Heart left ventricle (tissue), 16 donors: ENCODE measurements at regions of chr7 and their contacts with region 1.

Region 1: DNA sequence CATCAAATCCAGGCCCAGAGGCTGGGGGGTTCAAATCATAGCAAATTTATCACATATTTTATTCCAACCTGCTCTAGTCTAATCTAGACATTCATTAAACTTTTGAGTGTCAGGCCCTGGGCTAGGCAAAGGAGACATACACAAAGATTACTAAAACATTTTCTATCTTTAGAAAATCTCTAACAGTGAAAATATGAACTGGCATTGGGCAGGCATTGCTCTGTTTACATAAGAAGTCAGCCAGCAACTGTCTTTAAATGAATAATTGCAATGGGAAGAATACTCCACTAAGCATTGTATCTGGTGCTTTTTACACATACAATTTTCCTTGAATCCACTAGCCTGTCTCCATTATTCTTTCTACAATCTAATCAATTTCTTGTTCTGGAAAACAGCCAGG is 222.5 kb upstream of the LRRN3 start:
- DNase-seq: no peak
- ATAC-seq: no peak
- H3K4me3 ChIP-seq: no peak overlapping the region
- H3K27ac ChIP-seq: no peak overlapping the region
- H3K4me1 ChIP-seq: no peaks in the 10 kb centered on the region
- H3K27me3 ChIP-seq: no peaks in the 10 kb centered on the region
- CTCF ChIP-seq: no peak
- POLR2A ChIP-seq: no peak

Region 2: DNA sequence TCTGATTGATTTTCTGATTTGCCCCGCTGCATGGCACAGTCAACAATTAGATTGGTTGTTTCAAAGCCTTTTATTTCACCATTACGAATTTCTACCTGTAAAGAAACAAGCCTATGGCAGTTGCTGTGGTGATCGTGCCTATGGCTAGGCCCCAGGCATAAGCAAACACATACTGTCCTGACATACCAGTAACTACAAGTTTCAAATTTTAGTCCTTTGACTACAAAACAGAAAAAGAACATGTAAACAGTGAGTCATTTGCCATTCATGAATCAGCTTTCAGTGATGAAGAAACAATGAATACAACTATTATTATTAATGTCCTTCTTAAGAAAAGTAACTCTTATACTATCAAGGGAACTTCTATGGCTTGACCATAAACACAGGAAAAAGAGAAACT is 54.4 kb after region 1 on chr7:
- intact Hi-C with region 1: loop called in 1 of 10 experiments (anchors 10 kb)
- DNase-seq: no peak
- ATAC-seq: no peak
- H3K4me3 ChIP-seq: no peak overlapping the region
- H3K27ac ChIP-seq: no peak overlapping the region
- H3K4me1 ChIP-seq: peaks cover 0 to 15% (median 3%) of the 10 kb centered on the region in 12 donors
- H3K27me3 ChIP-seq: no peaks in the 10 kb centered on the region
- CTCF ChIP-seq: no peak
- POLR2A ChIP-seq: no peak

Region 3: DNA sequence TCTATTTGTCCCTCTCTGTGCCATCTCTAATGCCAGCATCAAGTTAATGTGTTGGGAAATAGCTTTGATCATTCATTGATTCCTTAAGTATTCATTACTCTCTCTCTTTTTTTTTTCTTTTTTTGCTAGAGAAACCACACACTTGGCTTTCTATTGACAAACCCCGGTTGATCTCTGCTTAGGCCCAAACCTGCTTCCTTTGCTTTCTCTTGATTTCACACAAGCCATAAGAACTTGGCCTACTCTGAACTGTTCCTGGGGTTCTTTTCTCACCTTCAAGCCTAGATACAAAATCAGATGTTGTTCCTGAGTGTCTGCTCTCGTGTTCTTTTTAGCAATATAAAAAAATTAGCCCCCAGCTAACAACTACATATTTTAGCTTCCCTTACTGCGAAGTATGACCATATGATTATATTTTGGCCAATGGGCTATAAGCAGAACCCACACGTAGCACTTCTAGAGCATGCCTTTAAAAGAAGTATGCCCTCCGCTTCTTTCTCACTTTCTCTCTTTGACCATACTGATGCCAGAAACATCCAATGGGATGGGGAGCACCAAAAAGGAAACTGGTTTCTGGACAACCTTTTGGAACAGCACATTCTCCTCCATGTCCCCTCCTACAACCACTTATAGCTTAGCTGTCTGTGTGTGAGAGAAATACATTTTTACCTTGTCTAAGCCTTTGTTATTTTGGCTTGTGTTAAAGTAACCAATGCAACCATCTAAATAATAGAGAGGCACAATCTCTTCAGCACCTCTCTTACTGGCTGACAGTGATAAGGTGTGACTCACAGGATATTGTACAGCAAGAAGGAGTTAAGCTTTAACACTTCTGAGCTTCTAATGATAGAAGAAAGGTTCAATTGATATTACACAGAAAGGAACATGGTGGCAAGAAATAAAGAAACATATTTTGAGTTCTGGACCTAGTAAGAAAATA is 125.8 kb after region 1 on chr7:
- intact Hi-C with region 1: no loop called
- DNase-seq: no peak
- ATAC-seq: peak; percentile 92 to 98 (median 94)
- H3K4me3 ChIP-seq: no peak overlapping the region
- H3K27ac ChIP-seq: peak overlapping the region in 9 of 12 donors; percentile 7 to 62 (median 42)
- H3K4me1 ChIP-seq: peaks cover 0 to 18% (median 0%) of the 10 kb centered on the region in 12 donors
- H3K27me3 ChIP-seq: no peaks in the 10 kb centered on the region
- CTCF ChIP-seq: no peak
- POLR2A ChIP-seq: no peak